Breast epithelium (tissue), 4 donors: ENCODE measurements at regions of chr3 and their contacts with region 1.

Region 1: DNA sequence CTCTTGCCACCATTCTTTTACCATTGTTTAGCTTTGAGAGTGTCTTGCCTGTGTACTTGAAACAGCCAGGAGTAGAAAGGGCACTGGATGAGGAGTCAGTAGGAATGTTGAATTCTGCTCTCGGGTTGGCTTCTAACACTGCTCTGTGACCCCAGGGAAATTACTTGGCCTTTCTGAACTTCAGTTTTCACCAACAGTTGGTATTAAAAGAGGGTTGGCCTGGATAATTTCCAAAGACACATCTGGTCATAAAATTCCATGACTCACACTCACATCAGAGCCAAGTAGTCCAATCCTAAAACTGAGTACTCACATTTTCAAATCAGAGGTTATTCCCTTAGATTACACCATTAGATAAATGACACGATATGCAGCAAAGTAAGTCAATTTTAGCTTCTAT is 141.6 kb downstream of the ECT2 start:
- DNase-seq: no peak
- H3K4me3 ChIP-seq: no peak overlapping the region
- H3K27ac ChIP-seq: no peak overlapping the region
- H3K4me1 ChIP-seq: no peaks in the 10 kb centered on the region
- H3K27me3 ChIP-seq: no peaks in the 10 kb centered on the region
- CTCF ChIP-seq: no peak
- POLR2A ChIP-seq: no peak

Region 2: GRCh38 chr3:171261446-171261845 is 1630.7 kb before region 1 on chr3:
- intact Hi-C with region 1: loop called (anchors 5 kb)
- DNase-seq: no peak
- H3K4me3 ChIP-seq: no peak overlapping the region
- H3K27ac ChIP-seq: peak overlapping the region in 1 of 2 donors; percentile 67
- H3K4me1 ChIP-seq: no peaks in the 10 kb centered on the region
- H3K27me3 ChIP-seq: no peaks in the 10 kb centered on the region
- CTCF ChIP-seq: no peak
- POLR2A ChIP-seq: no peak

Region 3: DNA sequence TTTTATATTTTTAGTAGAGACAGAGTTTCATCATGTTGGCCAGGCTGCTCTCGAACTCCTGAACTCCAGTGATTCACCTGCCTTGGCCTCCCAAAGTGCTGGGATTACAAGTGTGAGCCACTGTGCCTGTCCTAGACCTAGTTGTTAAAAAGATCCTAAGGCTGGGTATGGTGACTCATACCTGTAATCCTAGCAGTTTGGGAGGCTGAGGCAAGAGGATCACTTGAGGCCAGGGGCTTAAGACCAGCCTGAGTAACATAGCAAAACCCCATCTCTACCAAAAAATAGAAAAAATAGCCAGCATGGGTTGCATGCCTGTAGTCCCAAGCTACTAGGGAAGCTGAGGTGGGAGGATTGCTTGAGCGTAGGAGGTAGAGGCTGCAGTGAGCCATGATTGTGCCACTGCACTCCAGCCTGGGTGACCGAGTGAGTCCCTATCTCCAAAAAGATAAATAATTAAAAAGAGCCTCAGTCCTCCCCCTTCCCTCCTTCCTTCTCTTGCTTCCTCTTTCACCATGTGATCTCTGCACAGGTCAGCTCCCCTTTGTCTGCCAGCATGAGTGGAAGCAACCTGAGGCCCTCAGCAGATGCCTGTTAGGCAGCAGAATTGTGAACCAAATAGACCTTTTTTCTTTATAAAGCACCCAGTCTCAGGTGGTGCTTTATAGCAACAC is 862.6 kb before region 1 on chr3:
- intact Hi-C with region 1: no loop called
- DNase-seq: no peak
- H3K4me3 ChIP-seq: no peak overlapping the region
- H3K27ac ChIP-seq: no peak overlapping the region
- H3K4me1 ChIP-seq: no peaks in the 10 kb centered on the region
- H3K27me3 ChIP-seq: no peaks in the 10 kb centered on the region
- CTCF ChIP-seq: no peak
- POLR2A ChIP-seq: no peak

Region 4: GRCh38 chr3:172153335-172153861 is 738.8 kb before region 1 on chr3:
- intact Hi-C with region 1: no loop called
- DNase-seq: peak; percentile 82 to 96
- H3K4me3 ChIP-seq: peak overlapping the region in 2 of 3 donors; percentile 6 to 31
- H3K27ac ChIP-seq: peak overlapping the region; percentile 91 to 96
- H3K4me1 ChIP-seq: peaks cover 13 to 38% of the 10 kb centered on the region in 2 donors
- H3K27me3 ChIP-seq: no peaks in the 10 kb centered on the region
- CTCF ChIP-seq: no peak
- POLR2A ChIP-seq: no peak